PC-9 (cell line): ENCODE measurements at regions of chrX and their contacts with region 1.

Region 1: DNA sequence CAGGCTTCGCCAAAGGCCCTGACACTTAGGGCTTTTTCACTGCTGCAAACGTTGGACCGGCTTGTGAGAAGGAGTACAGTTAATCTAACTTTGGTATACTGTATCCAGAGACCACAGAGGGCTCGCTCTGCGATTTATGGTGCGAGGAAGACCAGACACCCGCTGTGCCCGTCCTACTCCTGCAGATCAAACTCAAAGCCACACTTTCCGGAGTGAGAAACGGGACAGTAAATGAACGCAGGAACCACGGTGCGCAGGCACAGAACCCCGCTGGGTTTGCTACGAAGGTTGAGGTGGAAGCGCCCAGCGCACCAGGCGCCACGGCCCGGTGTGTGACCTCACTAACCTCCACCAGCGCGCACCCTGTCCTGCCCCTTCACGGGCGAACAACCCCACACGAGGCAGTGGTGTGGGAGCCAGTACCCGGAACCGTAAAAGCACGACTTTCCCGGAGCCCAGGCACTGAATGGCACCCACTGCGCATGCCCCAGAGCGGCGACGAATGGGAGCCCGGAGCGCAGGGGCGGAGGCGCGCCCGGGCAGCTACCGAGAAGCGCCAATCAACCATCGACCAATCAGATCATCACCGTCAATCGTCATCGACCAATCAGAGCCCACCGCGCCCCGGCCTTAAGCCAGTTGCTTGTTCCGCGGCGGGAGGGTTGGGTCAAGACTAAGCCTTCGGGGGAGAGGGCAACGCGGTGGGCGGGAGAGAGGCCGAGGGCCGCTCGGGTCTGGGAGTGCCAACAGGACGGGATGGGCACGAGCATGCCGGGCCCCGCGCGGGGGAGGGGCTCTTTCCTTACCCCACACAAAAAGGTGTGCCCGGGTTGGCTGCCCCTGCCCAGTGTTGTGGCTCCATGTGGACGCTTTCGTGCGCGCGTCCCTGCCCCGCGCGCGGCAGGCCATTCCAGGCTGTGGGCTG is 21.3 kb upstream of the WDR45 start:
- DNase-seq: peak; percentile 75 to 84
- H3K4me3 ChIP-seq: peak overlapping the region; percentile 56; the same call in 1 of the 2 replicates
- H3K27ac ChIP-seq: peak overlapping the region; percentile 46
- H3K4me1 ChIP-seq: no peaks in the 10 kb centered on the region
- H3K27me3 ChIP-seq: no peaks in the 10 kb centered on the region
- CTCF ChIP-seq: no peak

Region 2: GRCh38 chrX:49073601-49074571 is 27.1 kb before region 1 on chrX and contains the start of gene PRAF2:
- CTCF ChIA-PET with region 1: no interaction called
- POLR2A ChIA-PET with region 1: no interaction called
- intact Hi-C with region 1: loop called (anchors 2 kb)
- DNase-seq: peak; percentile 33 to 78
- H3K4me3 ChIP-seq: no peak within 1 kb of the TSS
- H3K27ac ChIP-seq: no peak within 1 kb of the TSS
- H3K4me1 ChIP-seq: no peaks in the 10 kb centered on the region
- H3K27me3 ChIP-seq: no peaks in the 10 kb centered on the region
- CTCF ChIP-seq: no peak
- total RNA-seq, gene PRAF2: 12.8 and 17.6 TPM in 2 replicates

Region 3: DNA sequence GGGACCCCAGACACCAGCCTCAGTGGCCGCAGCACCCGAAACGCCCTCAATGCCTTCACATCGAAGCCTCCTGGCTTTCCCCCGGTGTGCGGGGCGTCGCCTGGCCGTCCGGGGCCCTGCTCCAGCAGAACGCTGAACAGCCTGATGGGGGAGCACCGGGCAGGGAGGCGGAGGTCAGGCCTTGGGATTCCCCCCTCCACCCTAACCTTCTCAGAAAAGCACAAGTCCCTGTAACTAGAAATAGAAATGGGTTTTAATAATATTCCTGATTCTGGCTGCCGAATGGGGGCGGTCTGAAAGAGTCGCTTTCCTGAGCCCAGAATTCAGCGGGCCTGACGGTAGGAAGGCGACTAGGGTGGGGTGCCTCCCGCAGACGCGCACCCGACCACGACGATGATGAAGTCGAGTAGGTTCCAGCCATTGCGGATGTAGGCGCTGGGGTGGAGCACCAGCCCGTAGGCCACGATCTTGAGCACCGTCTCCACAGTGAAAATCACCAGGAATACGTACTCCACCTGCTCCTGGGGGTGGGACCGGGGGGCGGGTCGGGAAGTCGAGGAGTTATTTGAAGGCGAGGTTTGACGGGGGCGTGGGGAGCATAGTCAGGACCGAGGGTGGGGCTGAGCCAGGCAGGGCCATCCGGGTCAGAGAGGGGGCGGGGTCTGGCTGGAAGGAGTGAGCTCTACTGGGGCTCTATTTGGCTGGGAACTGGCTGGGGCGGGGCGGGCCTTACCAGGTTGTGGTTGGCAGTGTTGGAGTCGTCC is 129.7 kb after region 1 on chrX:
- CTCF ChIA-PET with region 1: no interaction called
- POLR2A ChIA-PET with region 1: no interaction called
- intact Hi-C with region 1: no loop called
- DNase-seq: peak; percentile 36 to 50
- H3K4me3 ChIP-seq: peak overlapping the region; percentile 48; the same call in 1 of the 2 replicates
- H3K27ac ChIP-seq: no peak overlapping the region
- H3K4me1 ChIP-seq: no peaks in the 10 kb centered on the region
- H3K27me3 ChIP-seq: no peaks in the 10 kb centered on the region
- CTCF ChIP-seq: peak; percentile 19; the same call in 1 of the 2 replicates